ENCODE measurements at regions of chr11 and their contacts with region 1.

Region 1: GRCh38 chr11:10653926-10654810 is 39.4 kb downstream of the IRAG1 start:
- DNase-seq: peak; percentile 69 to 89 (median 72)
- ATAC-seq: peak; percentile 80
- H3K4me3 ChIP-seq: no peak overlapping the region
- H3K27ac ChIP-seq: peak overlapping the region; percentile 47; the same call in 2 of the 3 replicates
- H3K4me1 ChIP-seq: peaks cover 29 to 35% of the 10 kb centered on the region in 2 experiments
- H3K27me3 ChIP-seq: no peaks in the 10 kb centered on the region
- CTCF ChIP-seq: peak; percentile 74 to 88 (median 84)
- EP300 ChIP-seq: peak; percentile 10; the same call in 1 of the 2 replicates
- POLR2A ChIP-seq: no peak
- RAD21 ChIP-seq: peak; percentile 92 to 96

Region 2: DNA sequence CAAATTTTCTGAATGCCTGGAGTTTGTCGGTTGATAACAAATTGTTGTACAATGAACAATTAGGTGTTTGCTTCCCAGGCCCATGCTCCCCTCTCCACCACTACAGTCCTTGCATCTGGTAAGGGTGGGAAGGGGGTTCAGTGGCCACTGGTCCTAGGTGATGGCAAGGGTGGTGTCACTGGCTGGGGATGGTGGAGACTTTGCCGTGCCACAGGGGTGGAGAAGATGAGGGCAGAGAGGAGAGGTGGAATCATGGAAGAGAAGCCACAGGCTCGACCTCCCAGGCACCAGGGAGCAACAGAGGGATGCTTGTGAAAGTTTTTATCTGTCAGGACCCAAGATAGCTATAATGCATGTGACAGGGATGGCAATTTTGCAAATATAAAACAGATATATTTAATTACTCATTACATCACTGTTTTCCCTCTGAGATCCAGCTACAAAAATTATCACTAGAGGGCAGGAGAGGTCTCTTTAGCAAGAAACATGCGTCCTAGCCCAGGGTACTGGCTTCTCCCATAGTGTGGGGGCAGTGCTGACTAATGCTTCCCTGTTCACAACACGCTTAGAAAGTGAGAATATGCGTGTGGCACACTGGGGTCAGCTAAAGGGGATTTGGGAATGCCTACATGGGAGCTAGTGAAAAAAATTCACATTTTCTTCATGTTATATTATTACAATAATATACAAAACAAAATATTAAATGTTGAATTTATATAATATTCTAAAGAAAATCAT is 248.1 kb before region 1 on chr11:
- CTCF ChIA-PET with region 1: interaction called, 4 read pairs
- POLR2A ChIA-PET with region 1: no interaction called
- in situ Hi-C with region 1: loop called (anchors 10 kb)
- intact Hi-C with region 1: loop called (anchors 1 kb)
- DNase-seq: peak; percentile 79 to 90 (median 82)
- ATAC-seq: peak; percentile 98
- H3K4me3 ChIP-seq: no peak overlapping the region
- H3K27ac ChIP-seq: 0 out of 3 replicates have a peak overlapping the region, but pooled peaks have one; percentile 26
- H3K4me1 ChIP-seq: peaks cover 9 to 18% of the 10 kb centered on the region in 2 experiments; a peak in 4 of 5 replicates
- H3K27me3 ChIP-seq: peaks cover 0 to 5% of the 10 kb centered on the region in 2 experiments; a peak in 1 of 5 replicates
- CTCF ChIP-seq: peak; percentile 81 to 97 (median 95)
- EP300 ChIP-seq: peak; percentile 19; the same call in 1 of the 2 replicates
- POLR2A ChIP-seq: no peak
- RAD21 ChIP-seq: peak; percentile 92 to 96

Region 3: GRCh38 chr11:10413268-10413667 is 240.9 kb before region 1 on chr11:
- CTCF ChIA-PET with region 1: interaction called, 3 read pairs
- POLR2A ChIA-PET with region 1: interaction called, 3 read pairs
- in situ Hi-C with region 1: loop called (anchors 10 kb)
- intact Hi-C with region 1: loop called (anchors 1 kb)
- DNase-seq: peak in 1 of 4 experiments; percentile 61
- ATAC-seq: peak; percentile 83
- H3K4me3 ChIP-seq: no peak overlapping the region
- H3K27ac ChIP-seq: no peak overlapping the region
- H3K4me1 ChIP-seq: peaks cover 12 to 19% of the 10 kb centered on the region in 2 experiments; a peak in 2 of 5 replicates
- H3K27me3 ChIP-seq: no peaks in the 10 kb centered on the region
- CTCF ChIP-seq: peak; percentile 45 to 66 (median 56); a peak in 5 of 6 replicates
- EP300 ChIP-seq: no peak
- POLR2A ChIP-seq: no peak
- RAD21 ChIP-seq: peak; percentile 80 to 93

Region 4: DNA sequence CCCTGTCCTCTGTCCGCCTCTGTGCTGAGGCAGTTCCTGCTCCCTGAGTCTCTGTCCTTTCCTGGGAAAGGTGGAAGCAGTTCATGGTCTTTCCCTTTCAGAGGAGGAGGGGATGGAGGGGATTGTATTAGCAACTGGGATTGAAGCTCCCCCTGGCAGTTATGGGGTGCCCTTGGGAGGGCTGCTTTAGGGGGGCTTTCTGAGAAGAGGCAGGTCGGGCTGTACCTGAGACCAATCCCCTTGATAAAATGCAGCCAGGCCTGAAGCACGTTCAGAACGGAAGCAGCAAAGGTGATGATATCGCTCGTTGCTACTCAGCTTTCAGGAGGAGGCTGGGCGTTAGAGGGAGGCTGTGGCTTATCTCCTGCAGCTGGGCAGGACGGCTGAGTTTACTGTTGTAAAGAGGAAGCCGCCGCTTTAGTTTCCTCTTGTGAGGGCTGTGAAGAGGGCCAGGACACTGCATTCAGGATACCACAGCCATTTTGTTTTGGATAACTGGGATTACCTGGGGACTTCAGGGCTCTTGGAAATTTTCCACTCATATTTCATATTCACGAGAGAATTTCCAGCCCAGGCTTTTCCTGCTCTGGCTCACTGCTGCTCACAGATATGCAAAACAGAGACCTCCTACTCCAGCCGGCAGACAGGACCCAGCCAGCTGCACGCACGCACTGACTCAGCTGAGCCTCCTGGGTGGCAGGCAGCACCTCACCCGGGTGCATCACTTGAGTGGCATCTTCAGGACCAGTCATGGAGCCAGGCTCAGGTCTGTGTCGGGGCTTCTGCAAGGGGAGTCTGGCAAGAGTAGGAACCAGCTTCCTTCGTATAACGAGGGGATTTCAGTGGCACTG is 198.3 kb before region 1 on chr11:
- CTCF ChIA-PET with region 1: no interaction called
- POLR2A ChIA-PET with region 1: no interaction called
- in situ Hi-C with region 1: no loop called
- intact Hi-C with region 1: loop called (anchors 5 kb)
- DNase-seq: peak; percentile 63 to 95 (median 78)
- ATAC-seq: peak; percentile 89
- H3K4me3 ChIP-seq: peak overlapping the region; percentile 49
- H3K27ac ChIP-seq: peak overlapping the region; percentile 89
- H3K4me1 ChIP-seq: peaks cover 32 to 38% of the 10 kb centered on the region in 2 experiments
- H3K27me3 ChIP-seq: no peaks in the 10 kb centered on the region
- CTCF ChIP-seq: no peak
- EP300 ChIP-seq: peak; percentile 86
- POLR2A ChIP-seq: peak; percentile 78
- RAD21 ChIP-seq: 0 out of 4 replicates have a peak, but pooled peaks of 1 of the 2 experiments have one; percentile 6

Region 5: GRCh38 chr11:10514210-10514609 is 140.0 kb before region 1 on chr11:
- CTCF ChIA-PET with region 1: interaction called, 12 read pairs
- POLR2A ChIA-PET with region 1: interaction called, 3 read pairs
- in situ Hi-C with region 1: no loop called
- intact Hi-C with region 1: loop called (anchors 2 kb)
- DNase-seq: no peak
- ATAC-seq: no peak
- H3K4me3 ChIP-seq: no peak overlapping the region
- H3K27ac ChIP-seq: no peak overlapping the region
- H3K4me1 ChIP-seq: no peaks in the 10 kb centered on the region
- H3K27me3 ChIP-seq: no peaks in the 10 kb centered on the region
- CTCF ChIP-seq: peak in 2 of 3 experiments; percentile 9 to 36; a peak in 2 of 6 replicates
- EP300 ChIP-seq: no peak
- POLR2A ChIP-seq: no peak
- RAD21 ChIP-seq: peak in 1 of 2 experiments; percentile 32; a peak in 3 of 4 replicates

Region 6: GRCh38 chr11:10564696-10565318 is 89.4 kb before region 1 on chr11:
- CTCF ChIA-PET with region 1: interaction called, 3 read pairs
- POLR2A ChIA-PET with region 1: no interaction called
- in situ Hi-C with region 1: no loop called
- intact Hi-C with region 1: loop called (anchors 1 kb)
- DNase-seq: peak in 1 of 4 experiments; percentile 25
- ATAC-seq: peak; percentile 67
- H3K4me3 ChIP-seq: no peak overlapping the region
- H3K27ac ChIP-seq: no peak overlapping the region
- H3K4me1 ChIP-seq: peaks cover 0 to 6% of the 10 kb centered on the region in 2 experiments; a peak in 2 of 5 replicates
- H3K27me3 ChIP-seq: no peaks in the 10 kb centered on the region
- CTCF ChIP-seq: peak; percentile 45 to 66 (median 49)
- EP300 ChIP-seq: no peak
- POLR2A ChIP-seq: no peak
- RAD21 ChIP-seq: peak; percentile 81 to 82

Region 7: GRCh38 chr11:10623797-10624761 is 30.1 kb before region 1 on chr11:
- CTCF ChIA-PET with region 1: no interaction called
- POLR2A ChIA-PET with region 1: interaction called, 3 read pairs
- in situ Hi-C with region 1: no loop called
- intact Hi-C with region 1: loop called (anchors 1 kb)
- DNase-seq: peak; percentile 60 to 67 (median 62)
- ATAC-seq: peak; percentile 79
- H3K4me3 ChIP-seq: no peak overlapping the region
- H3K27ac ChIP-seq: no peak overlapping the region; the same call in 2 of the 3 replicates
- H3K4me1 ChIP-seq: peaks cover 9 to 13% of the 10 kb centered on the region in 2 experiments; a peak in 4 of 5 replicates
- H3K27me3 ChIP-seq: no peaks in the 10 kb centered on the region
- CTCF ChIP-seq: peak; percentile 72 to 80 (median 77)
- EP300 ChIP-seq: no peak
- POLR2A ChIP-seq: no peak
- RAD21 ChIP-seq: peak; percentile 78 to 89

Measured in K562 (cell line).